MCF 10A (cell line): ENCODE measurements at regions of chr20 and their contacts with region 1.

Region 1: GRCh38 chr20:45523821-45524220 is 8.4 kb upstream of the SPINT3 start:
- DNase-seq: no peak
- H3K4me3 Mint-ChIP-seq: no peak overlapping the region
- H3K27ac Mint-ChIP-seq: no peak overlapping the region
- H3K4me1 Mint-ChIP-seq: peaks cover 10% of the 10 kb centered on the region
- H3K27me3 Mint-ChIP-seq: peaks cover 9% of the 10 kb centered on the region
- CTCF ChIP-seq: no peak

Region 2: GRCh38 chr20:45507011-45507820 is 16.6 kb before region 1 on chr20:
- CTCF ChIA-PET with region 1: interaction called, 3 read pairs
- POLR2A ChIA-PET with region 1: interaction called, 49 read pairs
- intact Hi-C with region 1: no loop called
- DNase-seq: peak; percentile 53
- H3K4me3 Mint-ChIP-seq: no peak overlapping the region
- H3K27ac Mint-ChIP-seq: peak overlapping the region; percentile 69
- H3K4me1 Mint-ChIP-seq: peaks cover 35% of the 10 kb centered on the region
- H3K27me3 Mint-ChIP-seq: peaks cover under 1% of the 10 kb centered on the region
- CTCF ChIP-seq: no peak

Region 3: DNA sequence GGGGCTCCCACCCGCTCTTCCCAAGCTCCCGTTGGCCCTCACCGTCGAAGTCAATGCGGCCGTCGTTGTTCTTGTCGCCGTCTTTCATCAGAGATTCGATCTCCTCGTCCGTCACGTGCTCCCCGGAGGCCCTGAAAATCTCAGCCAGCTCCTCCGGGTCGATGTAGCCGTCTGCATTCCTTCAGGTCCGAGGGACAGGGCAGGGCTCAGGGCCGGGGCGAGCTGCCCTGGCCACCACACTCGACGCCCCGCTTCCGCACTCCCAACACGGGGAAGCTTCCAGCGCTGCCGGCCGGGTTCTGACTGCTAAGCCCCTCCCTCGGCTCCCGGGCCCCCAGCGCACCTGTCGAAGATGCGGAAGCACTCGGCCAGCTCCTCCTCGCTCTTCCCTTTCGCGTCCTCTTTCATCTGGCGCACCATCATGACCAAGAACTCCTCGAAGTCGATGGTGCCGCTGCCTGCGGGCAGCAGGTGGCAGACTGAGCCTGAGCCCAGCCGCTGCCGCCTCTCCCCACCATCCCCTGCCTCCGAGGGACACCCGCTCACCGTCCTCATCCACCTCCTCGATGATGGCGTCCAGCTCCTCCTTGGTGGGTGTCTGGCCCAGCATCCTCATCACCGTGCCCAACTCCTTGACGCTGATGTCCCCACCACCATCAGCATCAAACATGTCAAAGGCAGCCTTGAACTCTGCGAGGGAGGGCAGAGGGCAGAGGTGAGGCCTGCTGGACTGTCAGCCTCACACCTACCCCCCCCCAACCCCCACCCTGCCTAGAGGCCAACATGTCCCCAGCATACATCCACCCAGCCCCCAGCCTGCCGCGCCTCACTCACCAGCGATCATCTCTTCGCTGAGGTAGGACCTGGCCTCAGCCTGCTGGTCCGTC is 300.4 kb after region 1 on chr20:
- CTCF ChIA-PET with region 1: no interaction called
- POLR2A ChIA-PET with region 1: no interaction called
- intact Hi-C with region 1: no loop called
- DNase-seq: no peak
- H3K4me3 Mint-ChIP-seq: no peak overlapping the region
- H3K27ac Mint-ChIP-seq: peak overlapping the region; percentile 22
- H3K4me1 Mint-ChIP-seq: peaks cover 5% of the 10 kb centered on the region
- H3K27me3 Mint-ChIP-seq: peaks cover 10% of the 10 kb centered on the region
- CTCF ChIP-seq: no peak

Region 4: GRCh38 chr20:45867819-45868176 is 344.0 kb after region 1 on chr20:
- CTCF ChIA-PET with region 1: no interaction called
- POLR2A ChIA-PET with region 1: no interaction called
- intact Hi-C with region 1: no loop called
- DNase-seq: no peak
- H3K4me3 Mint-ChIP-seq: no peak overlapping the region
- H3K27ac Mint-ChIP-seq: no peak overlapping the region
- H3K4me1 Mint-ChIP-seq: peaks cover 6% of the 10 kb centered on the region
- H3K27me3 Mint-ChIP-seq: no peaks in the 10 kb centered on the region
- CTCF ChIP-seq: no peak